ENCODE measurements at regions of chr2 and their contacts with region 1.

Region 1: GRCh38 chr2:170455617-170456426 is 259.3 kb upstream of the SP5 start:
- DNase-seq: peak; percentile 19
- H3K4me3 Mint-ChIP-seq: peak overlapping the region; percentile 60
- H3K27ac Mint-ChIP-seq: peak overlapping the region; percentile 84
- H3K4me1 Mint-ChIP-seq: peaks cover 42% of the 10 kb centered on the region
- H3K27me3 Mint-ChIP-seq: no peaks in the 10 kb centered on the region
- CTCF ChIP-seq: no peak

Region 2: DNA sequence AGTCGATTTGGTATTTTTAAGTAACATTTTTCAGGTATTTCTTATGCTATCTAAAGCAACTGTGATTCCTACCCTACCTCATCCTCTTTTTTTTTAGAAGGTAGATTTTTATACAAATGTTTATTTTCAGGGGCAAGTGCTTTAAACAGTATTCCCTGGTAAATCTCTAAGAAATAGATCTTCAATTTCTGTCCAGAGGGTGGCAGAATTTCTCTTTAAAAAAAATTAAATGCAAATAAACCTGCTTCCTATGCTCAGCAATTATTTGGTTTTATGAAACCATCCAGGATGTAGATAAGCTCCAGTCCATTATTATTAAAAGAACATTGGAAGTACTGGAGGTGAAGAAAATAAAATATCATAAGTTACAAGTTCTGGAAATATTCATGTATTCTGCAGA is 85.9 kb before region 1 on chr2:
- CTCF ChIA-PET with region 1: interaction called, 13 read pairs
- intact Hi-C with region 1: no loop called
- DNase-seq: no peak
- H3K4me3 Mint-ChIP-seq: no peak overlapping the region
- H3K27ac Mint-ChIP-seq: no peak overlapping the region
- H3K4me1 Mint-ChIP-seq: peaks cover 18% of the 10 kb centered on the region
- H3K27me3 Mint-ChIP-seq: peaks cover 35% of the 10 kb centered on the region
- CTCF ChIP-seq: no peak

Measured in Calu3 (cell line).